OCI-LY7 (cell line): ENCODE measurements at regions of chr10 and their contacts with region 1.

Region 1: DNA sequence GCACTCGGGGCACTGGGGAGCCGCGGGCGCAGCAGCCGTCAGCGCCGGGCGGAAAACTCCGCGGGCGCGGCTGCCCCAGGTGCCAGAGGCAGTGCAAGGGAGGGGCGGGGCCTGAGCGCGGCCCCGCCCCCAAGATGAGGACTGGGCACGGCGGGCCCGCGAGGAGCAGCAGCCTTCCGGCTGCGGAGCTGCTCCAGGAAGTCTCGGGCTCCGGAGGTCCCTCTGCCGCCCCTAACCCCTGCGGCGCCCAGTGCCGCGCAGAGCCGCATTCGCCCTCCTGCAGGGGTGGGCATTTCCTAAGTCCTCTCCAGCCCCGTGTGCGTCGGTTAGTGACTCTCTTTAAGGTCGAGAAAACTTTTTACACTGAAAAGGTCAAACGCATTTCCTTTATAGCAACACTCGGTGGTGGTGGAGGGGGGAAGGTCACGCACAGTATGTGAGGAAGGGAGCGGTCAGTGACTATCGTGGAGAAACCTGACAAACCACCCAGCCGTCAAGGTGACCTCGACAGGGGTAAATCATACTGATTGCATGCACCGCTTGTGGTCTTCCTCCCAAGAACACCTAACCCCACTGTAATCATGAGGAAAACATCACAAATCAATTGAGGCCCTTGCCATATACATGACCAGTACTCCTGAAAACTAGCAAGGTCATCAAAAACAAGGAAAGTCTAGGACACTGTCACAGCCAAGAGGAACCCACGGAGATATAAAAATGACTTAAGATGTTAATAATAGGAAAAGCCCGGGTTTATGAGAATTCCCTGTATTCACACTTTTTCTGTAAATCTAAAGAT is at the start of gene ANXA11:
- DNase-seq: peak; percentile 93
- H3K4me3 ChIP-seq: peak within 1 kb of the TSS; percentile 80
- H3K27ac ChIP-seq: peak within 1 kb of the TSS; percentile 62
- H3K4me1 ChIP-seq: peaks cover 42% of the 10 kb centered on the region
- CTCF ChIP-seq: no peak
- total RNA-seq, gene ANXA11: 87.8 and 93.9 TPM in 2 replicates

Region 2: GRCh38 chr10:79242620-79243152 is 963.0 kb before region 1 on chr10:
- CTCF ChIA-PET with region 1: no interaction called
- POLR2A ChIA-PET with region 1: no interaction called
- intact Hi-C with region 1: loop called (anchors 10 kb)
- DNase-seq: peak; percentile 78
- H3K4me3 ChIP-seq: peak overlapping the region; percentile 76
- H3K27ac ChIP-seq: peak overlapping the region; percentile 90
- H3K4me1 ChIP-seq: peaks cover 49% of the 10 kb centered on the region
- CTCF ChIP-seq: no peak

Region 3: DNA sequence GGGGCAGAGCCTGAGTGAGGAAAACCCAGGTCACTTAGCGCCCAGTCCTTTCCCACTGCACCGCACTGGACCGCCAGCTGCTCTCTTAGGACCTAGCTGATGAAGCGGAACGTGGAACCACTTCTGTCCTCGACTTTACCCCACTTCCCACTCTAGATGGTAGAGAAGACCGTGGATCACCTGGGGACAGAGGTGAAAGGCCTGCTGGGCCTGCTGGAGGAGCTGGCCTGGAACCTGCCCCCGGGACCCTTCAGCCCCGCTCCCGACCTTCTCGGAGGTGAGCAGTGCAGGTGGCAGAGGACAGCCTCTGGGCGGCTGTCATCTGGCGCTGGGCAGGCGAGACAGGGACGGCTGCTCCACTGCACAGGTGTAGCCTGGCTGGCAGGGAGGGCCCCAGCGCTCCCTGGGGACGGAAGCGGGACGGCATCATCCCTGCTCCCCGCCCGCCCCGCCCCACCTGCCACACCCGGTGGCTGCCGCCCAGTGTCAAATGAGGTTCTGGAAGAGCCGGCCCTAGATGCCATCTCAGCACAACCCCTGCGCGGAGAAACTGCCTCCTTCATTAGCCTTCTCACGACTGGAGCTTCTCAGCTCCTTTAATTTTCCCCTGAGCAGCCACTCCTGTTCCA is 61.5 kb before region 1 on chr10:
- CTCF ChIA-PET with region 1: interaction called, 3 read pairs
- POLR2A ChIA-PET with region 1: no interaction called
- intact Hi-C with region 1: loop called (anchors 1 kb)
- DNase-seq: peak; percentile 67
- H3K4me3 ChIP-seq: peak overlapping the region; percentile 43
- H3K27ac ChIP-seq: no peak overlapping the region
- H3K4me1 ChIP-seq: peaks cover 23% of the 10 kb centered on the region
- CTCF ChIP-seq: no peak; the same call in 1 of the 2 replicates

Region 4: GRCh38 chr10:80168679-80169380 is 36.8 kb before region 1 on chr10:
- CTCF ChIA-PET with region 1: no interaction called
- POLR2A ChIA-PET with region 1: interaction called, 3 read pairs
- intact Hi-C with region 1: loop called (anchors 2 kb)
- DNase-seq: peak; percentile 34
- H3K4me3 ChIP-seq: no peak overlapping the region
- H3K27ac ChIP-seq: no peak overlapping the region
- H3K4me1 ChIP-seq: peaks cover 6% of the 10 kb centered on the region
- CTCF ChIP-seq: peak; percentile 67

Region 5: GRCh38 chr10:80187465-80188409 is 17.9 kb before region 1 on chr10:
- CTCF ChIA-PET with region 1: interaction called, 15 read pairs
- POLR2A ChIA-PET with region 1: interaction called, 36 read pairs
- intact Hi-C with region 1: loop called (anchors 1 kb)
- DNase-seq: peak; percentile 96
- H3K4me3 ChIP-seq: peak overlapping the region; percentile 63
- H3K27ac ChIP-seq: peak overlapping the region; percentile 97
- H3K4me1 ChIP-seq: peaks cover 69% of the 10 kb centered on the region
- CTCF ChIP-seq: no peak

Region 6: GRCh38 chr10:80459047-80459931 is 253.6 kb after region 1 on chr10:
- CTCF ChIA-PET with region 1: no interaction called
- POLR2A ChIA-PET with region 1: no interaction called
- intact Hi-C with region 1: loop called (anchors 5 kb)
- DNase-seq: peak; percentile 82
- H3K4me3 ChIP-seq: peak overlapping the region; percentile 32
- H3K27ac ChIP-seq: peak overlapping the region; percentile 93
- H3K4me1 ChIP-seq: peaks cover 86% of the 10 kb centered on the region
- CTCF ChIP-seq: peak; percentile 55; the same call in 1 of the 2 replicates